CD4-positive, alpha-beta T cell (primary cell): ENCODE measurements at regions of chr6 and their contacts with region 1.

Region 1: GRCh38 chr6:90274451-90275030 is 22.1 kb downstream of the BACH2 start:
- DNase-seq: peak; percentile 80 to 98 (median 86)
- ATAC-seq: peak; percentile 89
- H3K4me3 ChIP-seq: peak overlapping the region; percentile 5
- H3K4me3 Mint-ChIP-seq: peak overlapping the region; percentile 71
- H3K27ac ChIP-seq: peak overlapping the region; percentile 75 to 90
- H3K27ac Mint-ChIP-seq: peak overlapping the region; percentile 97
- H3K4me1 ChIP-seq: peaks cover 39% of the 10 kb centered on the region
- H3K4me1 Mint-ChIP-seq: peaks cover 89% of the 10 kb centered on the region
- H3K27me3 ChIP-seq: no peaks in the 10 kb centered on the region
- H3K27me3 Mint-ChIP-seq: no peaks in the 10 kb centered on the region
- CTCF ChIP-seq: peak; percentile 30

Region 2: DNA sequence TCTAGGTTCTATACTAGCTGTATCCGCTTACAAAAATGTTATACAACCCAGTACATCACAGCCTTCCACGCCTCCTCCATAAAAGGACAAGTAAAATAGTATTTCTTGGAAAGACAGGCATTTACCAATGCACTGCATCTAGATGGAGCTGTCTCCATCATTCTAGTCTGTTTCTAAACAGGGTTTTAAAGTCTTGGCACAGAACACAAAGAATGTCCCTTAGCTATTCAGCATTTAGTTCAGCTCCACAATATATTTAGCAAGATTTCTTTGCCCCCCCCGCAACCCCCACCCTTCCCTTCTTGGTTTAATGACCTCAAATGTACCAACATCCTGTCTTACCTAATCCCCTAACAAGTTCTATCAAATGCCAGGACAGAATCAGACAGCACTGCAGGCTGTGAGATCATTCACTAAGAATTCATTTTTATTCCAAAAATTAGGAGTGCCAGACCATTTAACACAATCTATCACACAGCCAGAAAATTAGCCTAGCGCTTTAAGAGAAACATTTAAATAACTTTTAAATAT is 176.5 kb before region 1 on chr6:
- CTCF ChIA-PET with region 1: no interaction called
- POLR2A ChIA-PET with region 1: no interaction called
- intact Hi-C with region 1: loop called in 1 of 2 experiments (anchors 5 kb)
- DNase-seq: peak in 5 of 14 experiments; percentile 17 to 51 (median 43)
- ATAC-seq: peak; percentile 77
- H3K4me3 ChIP-seq: no peak overlapping the region
- H3K4me3 Mint-ChIP-seq: peak overlapping the region; percentile 7
- H3K27ac ChIP-seq: no peak overlapping the region
- H3K27ac Mint-ChIP-seq: peak overlapping the region; percentile 82
- H3K4me1 ChIP-seq: peaks cover 34% of the 10 kb centered on the region
- H3K4me1 Mint-ChIP-seq: peaks cover 94% of the 10 kb centered on the region
- H3K27me3 ChIP-seq: no peaks in the 10 kb centered on the region
- H3K27me3 Mint-ChIP-seq: no peaks in the 10 kb centered on the region
- CTCF ChIP-seq: peak; percentile 3

Region 3: DNA sequence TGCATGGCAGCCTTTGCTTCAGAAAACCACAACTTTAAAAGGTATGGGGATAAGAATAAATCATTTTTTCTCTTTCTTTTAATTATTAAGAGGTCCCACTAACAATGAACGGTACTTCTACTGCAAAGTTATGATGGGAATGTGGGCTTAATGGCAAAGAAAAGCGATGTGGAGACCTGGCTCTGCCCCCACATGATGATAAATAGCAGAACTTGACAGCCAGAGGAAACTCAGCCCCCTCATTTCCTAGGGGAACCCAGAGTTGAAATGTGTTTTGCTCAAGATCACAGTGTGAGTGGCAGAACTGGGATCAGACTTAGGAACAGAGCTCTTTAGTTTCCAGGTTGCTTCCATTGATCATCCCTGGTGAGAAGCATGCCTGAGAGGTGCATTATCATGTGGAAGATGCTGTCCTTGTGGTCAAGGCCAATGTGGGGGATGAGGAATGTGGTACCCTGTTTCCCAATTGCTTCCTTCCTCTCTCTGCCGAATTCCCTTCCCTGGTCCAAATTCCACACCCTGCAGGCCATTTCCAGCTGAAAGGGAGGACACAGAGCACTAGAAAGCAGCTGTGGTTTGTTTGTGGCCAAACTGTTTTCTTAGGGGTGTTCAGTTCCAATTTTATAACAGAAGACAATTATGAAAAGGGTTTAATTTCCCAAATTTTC is 43.9 kb before region 1 on chr6:
- CTCF ChIA-PET with region 1: no interaction called
- POLR2A ChIA-PET with region 1: interaction called, 18 read pairs
- intact Hi-C with region 1: loop called (anchors 2 to 5 kb)
- DNase-seq: no peak
- ATAC-seq: no peak
- H3K4me3 ChIP-seq: no peak overlapping the region
- H3K4me3 Mint-ChIP-seq: peak overlapping the region; percentile 40
- H3K27ac ChIP-seq: peak overlapping the region in 1 of 2 donors; percentile 80
- H3K27ac Mint-ChIP-seq: peak overlapping the region; percentile 96
- H3K4me1 ChIP-seq: peaks cover 46% of the 10 kb centered on the region
- H3K4me1 Mint-ChIP-seq: peaks cover 97% of the 10 kb centered on the region
- H3K27me3 ChIP-seq: no peaks in the 10 kb centered on the region
- H3K27me3 Mint-ChIP-seq: no peaks in the 10 kb centered on the region
- CTCF ChIP-seq: no peak

Region 4: DNA sequence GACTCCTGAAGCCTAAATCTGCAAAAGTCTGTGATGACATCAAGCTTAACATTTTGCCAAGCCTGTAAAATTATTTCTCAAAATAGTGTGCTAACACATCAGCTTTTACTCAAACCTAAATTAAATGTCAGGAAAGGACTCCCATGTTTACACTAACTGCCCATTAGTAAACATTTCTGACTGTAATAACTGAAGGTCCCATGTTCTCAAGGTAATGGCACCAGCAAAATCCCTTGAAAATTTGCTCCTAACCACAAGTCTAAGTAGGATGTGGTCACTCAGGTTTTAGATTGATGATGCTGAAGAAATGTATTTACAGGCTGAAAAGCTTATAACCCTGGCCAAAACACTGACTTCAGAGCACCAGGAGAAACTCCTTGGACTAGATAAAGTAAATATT is 10.9 kb before region 1 on chr6:
- CTCF ChIA-PET with region 1: interaction called, 6 read pairs
- POLR2A ChIA-PET with region 1: interaction called, 26 read pairs
- intact Hi-C with region 1: no loop called
- DNase-seq: peak in 1 of 14 experiments; percentile 46
- ATAC-seq: no peak
- H3K4me3 ChIP-seq: no peak overlapping the region
- H3K4me3 Mint-ChIP-seq: peak overlapping the region; percentile 40
- H3K27ac ChIP-seq: no peak overlapping the region
- H3K27ac Mint-ChIP-seq: peak overlapping the region; percentile 96
- H3K4me1 ChIP-seq: peaks cover 19% of the 10 kb centered on the region
- H3K4me1 Mint-ChIP-seq: peaks cover 97% of the 10 kb centered on the region
- H3K27me3 ChIP-seq: no peaks in the 10 kb centered on the region
- H3K27me3 Mint-ChIP-seq: no peaks in the 10 kb centered on the region
- CTCF ChIP-seq: no peak

Region 5: GRCh38 chr6:90290811-90291420 is 16.4 kb after region 1 on chr6:
- CTCF ChIA-PET with region 1: interaction called, 26 read pairs
- POLR2A ChIA-PET with region 1: interaction called, 91 read pairs
- intact Hi-C with region 1: loop called (anchors 1 kb)
- DNase-seq: no peak
- ATAC-seq: no peak
- H3K4me3 ChIP-seq: no peak overlapping the region
- H3K4me3 Mint-ChIP-seq: peak overlapping the region; percentile 93
- H3K27ac ChIP-seq: no peak overlapping the region
- H3K27ac Mint-ChIP-seq: peak overlapping the region; percentile 91
- H3K4me1 ChIP-seq: peaks cover 44% of the 10 kb centered on the region
- H3K4me1 Mint-ChIP-seq: peaks cover 88% of the 10 kb centered on the region
- H3K27me3 ChIP-seq: no peaks in the 10 kb centered on the region
- H3K27me3 Mint-ChIP-seq: peaks cover 4% of the 10 kb centered on the region
- CTCF ChIP-seq: no peak